ENCODE measurements at regions of chr19 and their contacts with region 1.

Region 1: DNA sequence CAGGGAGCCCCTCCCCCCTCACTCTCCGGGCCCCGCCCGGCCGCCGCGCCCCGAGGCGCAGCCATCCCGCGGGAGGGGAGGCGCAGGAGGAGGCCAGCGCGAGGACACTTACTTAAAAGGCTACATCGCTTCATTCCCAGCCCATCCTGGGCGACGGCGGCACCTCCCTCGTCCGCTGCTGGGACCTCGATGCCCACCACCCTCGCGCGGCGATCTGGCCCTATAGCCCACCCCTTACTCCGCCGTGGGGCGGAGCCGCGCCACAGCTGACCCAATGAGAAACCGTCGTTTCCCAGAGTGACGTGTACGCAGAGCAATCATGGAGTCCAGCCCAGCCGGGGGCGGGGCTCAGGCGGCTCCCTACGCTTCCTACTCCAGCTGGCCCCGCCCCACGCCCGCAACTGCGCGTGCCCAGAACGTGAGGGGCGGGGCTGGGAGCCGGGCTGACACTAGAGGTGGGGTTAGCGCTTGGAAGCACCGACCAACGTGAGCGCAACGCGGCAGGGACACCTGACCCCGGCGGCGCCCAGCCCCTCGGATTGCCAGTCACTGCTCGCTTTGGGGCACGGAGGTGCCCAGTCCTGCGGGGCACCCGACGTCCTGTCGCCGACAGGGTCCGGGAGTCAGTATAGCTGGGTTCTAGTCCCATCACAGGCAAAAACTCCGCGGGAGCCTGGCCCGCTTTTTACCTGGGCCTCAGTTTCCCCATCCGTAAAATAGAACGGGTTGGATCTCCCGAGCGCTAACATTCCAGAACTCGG is at the start of gene ANKRD27:
- DNase-seq: peak; percentile 98 to 99
- H3K4me3 ChIP-seq: peak within 1 kb of the TSS; percentile 90
- H3K4me3 Mint-ChIP-seq: peak within 1 kb of the TSS; percentile 90
- H3K27ac Mint-ChIP-seq: peak within 1 kb of the TSS; percentile 75
- H3K4me1 ChIP-seq: peaks cover 15% of the 10 kb centered on the region
- H3K4me1 Mint-ChIP-seq: peaks cover 32% of the 10 kb centered on the region
- H3K27me3 ChIP-seq: no peaks in the 10 kb centered on the region
- H3K27me3 Mint-ChIP-seq: no peaks in the 10 kb centered on the region
- CTCF ChIP-seq: no peak
- total RNA-seq, gene ANKRD27: 53.9 and 54.3 TPM in 2 replicates

Region 2: DNA sequence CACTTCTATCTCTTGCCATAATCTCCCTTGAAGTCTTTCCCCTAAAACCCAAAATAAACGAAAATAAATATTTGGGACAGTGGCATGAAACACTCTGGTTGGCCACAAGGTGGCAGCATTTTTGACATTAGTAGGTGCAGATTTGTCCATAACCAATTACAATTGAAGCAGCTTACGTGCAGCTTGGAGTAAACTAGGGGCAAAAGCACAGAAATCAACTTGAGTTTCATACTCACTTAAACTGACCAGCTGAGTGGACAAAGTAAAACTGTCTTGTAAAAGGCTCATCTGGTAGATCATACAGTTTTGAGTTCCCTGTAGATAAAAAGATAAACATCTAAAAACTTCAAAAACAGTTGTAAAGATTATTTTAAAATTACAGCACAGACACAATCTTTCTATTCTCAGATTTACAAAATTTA is 75.4 kb before region 1 on chr19:
- CTCF ChIA-PET with region 1: interaction called, 5 read pairs
- POLR2A ChIA-PET with region 1: no interaction called
- intact Hi-C with region 1: loop called (anchors 10 kb)
- DNase-seq: peak in 1 of 2 experiments; percentile 60
- H3K4me3 ChIP-seq: no peak overlapping the region
- H3K4me3 Mint-ChIP-seq: no peak overlapping the region
- H3K27ac Mint-ChIP-seq: no peak overlapping the region
- H3K4me1 ChIP-seq: no peaks in the 10 kb centered on the region
- H3K4me1 Mint-ChIP-seq: peaks cover 7% of the 10 kb centered on the region
- H3K27me3 ChIP-seq: no peaks in the 10 kb centered on the region
- H3K27me3 Mint-ChIP-seq: no peaks in the 10 kb centered on the region
- CTCF ChIP-seq: peak; percentile 79 to 84

Region 3: DNA sequence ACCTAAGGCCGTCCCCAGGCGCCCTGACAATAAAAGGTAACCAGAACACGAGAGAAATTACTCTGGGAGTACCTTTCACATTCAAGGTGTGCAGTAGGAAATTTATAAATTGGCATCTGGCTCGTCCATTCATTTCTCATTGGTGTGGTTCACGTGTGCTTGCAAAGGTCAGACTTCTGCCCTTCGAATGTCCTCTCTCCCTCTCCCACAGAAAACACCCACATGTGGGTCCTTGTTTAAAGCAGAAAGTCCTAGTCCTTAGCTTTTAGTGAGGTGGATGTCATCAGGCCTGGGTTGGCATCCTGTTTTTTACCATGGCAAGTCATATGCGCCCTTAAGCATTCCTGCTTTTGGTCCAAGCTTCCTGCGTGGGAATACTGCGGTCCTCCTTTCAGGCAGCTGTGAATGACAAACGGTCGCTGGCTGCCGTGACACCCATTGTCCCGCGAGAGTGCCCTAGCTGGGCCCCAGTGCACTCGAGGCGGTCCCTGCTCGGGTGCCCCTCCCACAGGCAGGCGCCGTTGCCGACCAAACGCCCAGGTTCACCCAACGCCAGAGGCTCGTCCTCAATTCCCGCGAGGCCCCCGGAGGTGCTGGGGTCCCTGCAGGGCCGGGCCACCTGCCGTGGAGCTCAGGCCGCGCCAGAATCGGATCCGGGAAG is 16.3 kb after region 1 on chr19 and contains the start of gene NUDT19:
- CTCF ChIA-PET with region 1: no interaction called
- POLR2A ChIA-PET with region 1: interaction called, 5 read pairs
- intact Hi-C with region 1: loop called (anchors 1 kb)
- DNase-seq: peak; percentile 94 to 95
- H3K4me3 ChIP-seq: peak within 1 kb of the TSS; percentile 92
- H3K4me3 Mint-ChIP-seq: peak within 1 kb of the TSS; percentile 80
- H3K27ac Mint-ChIP-seq: peak within 1 kb of the TSS; percentile 81
- H3K4me1 ChIP-seq: peaks cover 20% of the 10 kb centered on the region
- H3K4me1 Mint-ChIP-seq: peaks cover 40% of the 10 kb centered on the region
- H3K27me3 ChIP-seq: no peaks in the 10 kb centered on the region
- H3K27me3 Mint-ChIP-seq: no peaks in the 10 kb centered on the region
- CTCF ChIP-seq: no peak
- total RNA-seq, gene NUDT19: 24.0 and 24.4 TPM in 2 replicates

Measured in Caco-2 (cell line).